Activated CD4-positive, alpha-beta memory T cell treated with anti-CD3 and anti-CD28 coated beads for 36 hours (primary cell): ENCODE measurements at regions of chr20 and their contacts with region 1.

Region 1: GRCh38 chr20:2984956-2985661 is 58.3 kb upstream of the GNRH2 start:
- DNase-seq: peak; percentile 72
- H3K4me3 Mint-ChIP-seq: no peak overlapping the region
- H3K27ac Mint-ChIP-seq: no peak overlapping the region
- H3K4me1 Mint-ChIP-seq: peaks cover 20% of the 10 kb centered on the region
- H3K27me3 Mint-ChIP-seq: no peaks in the 10 kb centered on the region

Region 2: DNA sequence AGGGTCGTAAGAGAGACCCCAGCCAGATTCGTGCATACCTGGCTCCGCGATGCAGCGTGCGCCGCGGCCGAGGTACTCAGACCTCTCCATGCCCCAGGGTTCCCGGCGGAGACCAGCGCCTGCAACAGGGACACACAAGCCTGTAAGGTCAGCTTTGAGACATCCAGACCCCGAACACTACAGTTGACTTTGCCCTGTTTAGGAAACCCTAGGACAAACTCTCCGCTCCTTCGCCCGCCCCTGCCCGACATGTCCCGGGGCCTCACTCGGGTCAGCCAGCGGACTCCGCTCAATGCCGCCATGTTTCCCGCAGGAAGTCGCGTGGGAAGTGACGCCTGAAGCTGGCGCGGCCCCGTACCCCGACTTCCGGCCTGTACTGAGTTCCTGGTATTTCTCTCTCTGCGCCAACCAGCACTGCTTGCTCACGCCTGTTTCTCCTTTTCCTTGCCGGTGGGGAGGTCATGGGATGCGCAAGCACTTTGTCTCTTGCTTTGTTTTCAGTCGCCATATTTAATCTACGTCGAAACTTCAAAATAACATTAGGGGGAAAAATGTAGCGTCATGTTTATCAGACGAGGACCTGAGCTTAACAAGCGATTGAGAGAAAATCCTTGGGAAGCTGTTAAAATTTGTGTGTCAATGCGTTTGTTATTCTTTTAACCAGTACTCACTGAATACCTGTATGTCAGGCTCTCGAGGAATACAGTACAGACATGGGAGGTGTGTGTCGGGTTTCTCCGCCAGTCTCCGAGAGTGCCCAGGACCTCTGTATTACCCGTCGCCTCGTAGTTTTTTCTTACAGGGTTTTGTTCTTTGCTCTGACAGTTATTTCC is 321.0 kb before region 1 on chr20 and contains the start of gene IDH3B:
- CTCF ChIA-PET with region 1: no interaction called
- POLR2A ChIA-PET with region 1: no interaction called
- intact Hi-C with region 1: loop called (anchors 2 kb)
- DNase-seq: peak; percentile 97
- H3K4me3 Mint-ChIP-seq: peak within 1 kb of the TSS; percentile 79
- H3K27ac Mint-ChIP-seq: peak within 1 kb of the TSS; percentile 94
- H3K4me1 Mint-ChIP-seq: peaks cover 20% of the 10 kb centered on the region
- H3K27me3 Mint-ChIP-seq: no peaks in the 10 kb centered on the region
- total RNA-seq, gene IDH3B: 95.6 to 99.1 TPM

Region 3: GRCh38 chr20:2849529-2849928 is 135.6 kb before region 1 on chr20:
- CTCF ChIA-PET with region 1: no interaction called
- POLR2A ChIA-PET with region 1: no interaction called
- intact Hi-C with region 1: loop called (anchors 1 kb)
- DNase-seq: no peak
- H3K4me3 Mint-ChIP-seq: no peak overlapping the region
- H3K27ac Mint-ChIP-seq: no peak overlapping the region
- H3K4me1 Mint-ChIP-seq: peaks cover 33% of the 10 kb centered on the region
- H3K27me3 Mint-ChIP-seq: no peaks in the 10 kb centered on the region

Region 4: DNA sequence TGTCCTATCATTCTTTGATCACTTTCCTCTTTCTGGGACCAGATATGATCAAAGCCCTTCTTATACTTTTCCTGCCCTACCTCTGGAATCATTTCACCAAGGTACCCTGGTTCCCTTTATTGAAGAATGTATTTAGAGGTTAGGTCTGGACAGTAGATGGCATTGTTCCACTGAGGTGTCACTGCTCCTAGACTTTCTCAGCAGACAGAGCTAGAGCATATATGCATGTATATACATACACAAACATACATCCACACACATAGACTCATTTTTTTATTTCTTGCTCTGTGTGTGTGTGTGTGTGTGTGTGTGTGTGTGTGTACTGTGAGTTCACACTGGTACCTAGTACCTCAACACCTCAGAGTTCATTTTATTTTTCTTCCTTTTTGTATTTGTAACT is 70.9 kb before region 1 on chr20:
- CTCF ChIA-PET with region 1: interaction called, 3 read pairs
- POLR2A ChIA-PET with region 1: no interaction called
- intact Hi-C with region 1: loop called (anchors 1 kb)
- DNase-seq: no peak
- H3K4me3 Mint-ChIP-seq: no peak overlapping the region
- H3K27ac Mint-ChIP-seq: no peak overlapping the region
- H3K4me1 Mint-ChIP-seq: peaks cover 20% of the 10 kb centered on the region
- H3K27me3 Mint-ChIP-seq: no peaks in the 10 kb centered on the region

Region 5: DNA sequence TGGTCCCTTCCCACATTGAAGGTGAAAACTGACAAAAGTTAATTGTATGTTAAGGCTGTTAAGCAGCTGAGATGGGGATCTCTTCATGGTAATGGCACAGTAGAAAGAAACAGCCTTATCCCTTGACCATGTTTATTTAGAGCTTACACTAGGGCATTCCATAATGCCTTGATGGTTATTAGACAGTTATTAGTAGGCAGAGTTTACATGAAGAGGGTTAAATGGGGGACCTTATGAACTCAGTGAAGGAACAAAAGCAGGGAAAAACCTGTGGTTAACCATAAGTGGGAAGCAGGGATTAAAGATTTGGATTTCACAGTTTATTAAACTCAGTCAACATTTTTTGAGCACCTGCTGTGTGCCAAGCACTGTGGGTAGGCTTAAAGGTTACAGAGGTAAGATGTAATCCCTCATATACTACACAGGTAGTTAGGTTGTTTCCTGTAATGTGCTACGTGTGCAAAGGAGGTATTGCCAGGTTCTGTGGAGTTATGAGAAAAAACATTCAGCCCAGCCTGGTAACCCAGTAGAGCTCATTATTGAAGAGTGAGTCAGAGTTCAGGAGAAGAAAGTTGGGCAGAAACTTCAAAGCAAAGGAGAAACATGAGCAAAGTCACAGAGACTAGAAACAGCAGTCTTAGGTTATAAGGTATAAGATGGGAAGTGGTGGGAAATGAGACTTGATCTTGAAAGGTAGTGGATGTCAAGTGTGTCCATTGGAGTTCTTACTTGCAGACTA is 26.0 kb after region 1 on chr20:
- CTCF ChIA-PET with region 1: interaction called, 5 read pairs
- POLR2A ChIA-PET with region 1: interaction called, 127 read pairs
- intact Hi-C with region 1: loop called (anchors 1 kb)
- DNase-seq: peak; percentile 49
- H3K4me3 Mint-ChIP-seq: no peak overlapping the region
- H3K27ac Mint-ChIP-seq: peak overlapping the region; percentile 97
- H3K4me1 Mint-ChIP-seq: peaks cover 65% of the 10 kb centered on the region
- H3K27me3 Mint-ChIP-seq: no peaks in the 10 kb centered on the region

Region 6: DNA sequence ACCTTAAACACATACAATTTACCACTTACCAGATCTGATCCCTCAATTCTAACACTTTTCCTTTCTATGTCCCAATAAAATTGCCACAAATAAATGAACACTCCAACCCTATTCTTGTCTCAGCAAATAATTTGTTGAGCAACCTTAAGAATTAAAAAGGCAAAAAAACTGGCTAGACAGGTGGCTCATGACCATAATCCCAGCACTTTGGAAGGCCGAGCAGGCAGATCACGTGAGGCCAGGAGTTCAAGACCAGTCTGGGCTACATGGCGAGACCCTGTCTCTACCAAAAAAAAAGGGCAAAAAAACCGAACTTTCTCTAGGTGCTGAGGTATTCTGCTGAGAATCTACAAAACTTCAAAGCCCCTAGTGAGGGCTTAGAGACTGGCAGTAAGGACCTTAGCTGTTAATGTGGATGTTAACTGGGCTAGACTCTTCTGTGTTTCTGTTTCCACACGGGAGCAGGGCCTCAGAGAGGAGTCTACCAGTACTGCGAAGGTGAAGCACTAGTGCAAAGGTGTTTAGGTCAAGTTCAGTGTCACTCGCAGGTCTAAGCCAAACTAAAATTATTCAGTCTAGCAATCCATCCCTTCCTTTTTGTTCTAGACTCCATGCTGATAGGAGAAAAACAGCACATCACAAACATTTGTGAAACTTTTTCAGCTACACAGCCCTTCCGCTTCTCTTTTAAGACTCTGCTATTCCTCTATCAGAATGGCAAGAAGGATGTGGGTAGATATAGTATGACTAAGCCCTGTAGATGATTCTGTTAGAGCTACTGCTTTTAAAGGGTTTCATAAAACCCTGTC is 171.9 kb after region 1 on chr20:
- CTCF ChIA-PET with region 1: no interaction called
- POLR2A ChIA-PET with region 1: no interaction called
- intact Hi-C with region 1: loop called (anchors 5 kb)
- DNase-seq: peak; percentile 31
- H3K4me3 Mint-ChIP-seq: peak overlapping the region; percentile 89
- H3K27ac Mint-ChIP-seq: peak overlapping the region; percentile 95
- H3K4me1 Mint-ChIP-seq: peaks cover 55% of the 10 kb centered on the region
- H3K27me3 Mint-ChIP-seq: no peaks in the 10 kb centered on the region